A549 (cell line): ENCODE measurements at regions of chr1 and their contacts with region 1.

Region 1: GRCh38 chr1:115246526-115246925 is 91.5 kb downstream of the NGF start:
- DNase-seq: no peak
- ATAC-seq: no peak
- H3K4me3 ChIP-seq: no peak overlapping the region
- H3K27ac ChIP-seq: no peak overlapping the region
- H3K4me1 ChIP-seq: no peaks in the 10 kb centered on the region
- CTCF ChIP-seq: no peak
- EP300 ChIP-seq: no peak
- POLR2A ChIP-seq: no peak
- RAD21 ChIP-seq: no peak

Region 2: DNA sequence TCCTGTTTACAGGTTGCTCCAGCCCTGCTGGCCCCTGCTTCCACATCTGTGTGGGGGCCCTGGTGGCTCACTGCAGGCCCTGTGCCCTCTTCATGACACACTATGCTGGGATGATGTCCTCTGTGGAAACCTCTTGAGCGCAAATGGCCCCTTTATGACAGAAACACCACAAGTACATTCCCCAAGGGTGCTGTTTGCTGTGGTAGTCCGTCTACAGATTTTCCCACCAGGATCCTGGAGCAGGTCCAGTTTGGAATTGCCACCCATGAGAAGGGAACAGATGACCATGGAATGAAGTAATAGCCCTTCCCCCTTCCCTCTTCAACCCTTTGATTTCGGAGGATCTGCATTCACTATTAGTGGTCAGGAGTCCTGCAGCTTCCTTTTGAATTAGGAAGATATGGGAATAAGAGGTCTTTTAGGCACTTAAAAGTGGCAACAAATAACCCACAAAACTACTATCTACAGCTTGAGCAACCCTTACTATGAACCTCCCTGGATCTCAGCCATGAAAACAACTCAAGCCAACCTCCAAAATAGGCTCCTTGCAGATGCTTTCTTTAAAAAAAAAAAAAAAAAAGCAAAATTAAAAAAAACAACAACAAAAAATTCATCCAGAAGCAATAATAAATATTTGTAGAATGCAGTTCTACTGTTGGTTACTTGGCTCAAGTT is 35.3 kb before region 1 on chr1:
- CTCF ChIA-PET with region 1: no interaction called
- POLR2A ChIA-PET with region 1: interaction called, 10 read pairs
- DNase-seq: no peak
- ATAC-seq: no peak
- H3K4me3 ChIP-seq: no peak overlapping the region
- H3K27ac ChIP-seq: no peak overlapping the region
- H3K4me1 ChIP-seq: peaks cover 24% of the 10 kb centered on the region
- CTCF ChIP-seq: no peak
- EP300 ChIP-seq: no peak
- POLR2A ChIP-seq: no peak
- RAD21 ChIP-seq: no peak

Region 3: DNA sequence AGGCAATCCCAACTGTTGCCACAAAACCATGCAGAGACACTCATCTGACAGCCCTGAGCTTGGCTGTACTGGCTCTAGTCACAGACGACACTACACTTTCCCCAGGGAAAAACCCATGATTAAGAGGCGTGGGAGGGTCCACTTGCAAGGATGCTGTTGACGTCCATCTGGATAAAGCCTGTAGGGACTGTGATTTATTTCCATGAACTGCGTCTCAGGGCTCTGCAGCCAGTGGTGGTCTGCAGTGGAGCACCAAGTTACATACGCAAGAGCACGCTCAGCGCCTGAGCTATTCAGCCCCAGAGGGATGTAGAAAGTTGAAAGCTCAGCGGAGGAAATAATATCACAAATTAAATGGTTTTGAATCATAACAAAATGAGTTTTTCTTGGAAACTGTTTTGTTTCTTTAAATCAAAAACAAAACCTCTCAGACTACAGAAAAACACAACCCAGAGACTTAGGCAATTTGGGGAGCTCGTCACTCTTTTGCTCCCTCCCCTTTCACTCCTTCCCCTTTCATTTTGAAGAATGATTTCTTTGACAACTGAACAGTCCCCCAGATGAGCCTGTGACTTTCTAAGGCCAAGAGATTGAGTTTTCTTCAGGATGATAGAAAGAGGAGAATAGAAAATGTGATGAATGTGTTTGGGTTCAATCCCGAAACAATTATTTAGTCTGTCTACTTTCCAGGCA is 20.3 kb after region 1 on chr1:
- CTCF ChIA-PET with region 1: no interaction called
- POLR2A ChIA-PET with region 1: no interaction called
- DNase-seq: no peak
- ATAC-seq: no peak
- H3K4me3 ChIP-seq: no peak overlapping the region
- H3K27ac ChIP-seq: no peak overlapping the region
- H3K4me1 ChIP-seq: no peaks in the 10 kb centered on the region
- CTCF ChIP-seq: no peak
- EP300 ChIP-seq: no peak
- POLR2A ChIP-seq: no peak
- RAD21 ChIP-seq: no peak